Vagina (tissue), 2 donors: ENCODE measurements at regions of chrX and their contacts with region 1.

Region 1: DNA sequence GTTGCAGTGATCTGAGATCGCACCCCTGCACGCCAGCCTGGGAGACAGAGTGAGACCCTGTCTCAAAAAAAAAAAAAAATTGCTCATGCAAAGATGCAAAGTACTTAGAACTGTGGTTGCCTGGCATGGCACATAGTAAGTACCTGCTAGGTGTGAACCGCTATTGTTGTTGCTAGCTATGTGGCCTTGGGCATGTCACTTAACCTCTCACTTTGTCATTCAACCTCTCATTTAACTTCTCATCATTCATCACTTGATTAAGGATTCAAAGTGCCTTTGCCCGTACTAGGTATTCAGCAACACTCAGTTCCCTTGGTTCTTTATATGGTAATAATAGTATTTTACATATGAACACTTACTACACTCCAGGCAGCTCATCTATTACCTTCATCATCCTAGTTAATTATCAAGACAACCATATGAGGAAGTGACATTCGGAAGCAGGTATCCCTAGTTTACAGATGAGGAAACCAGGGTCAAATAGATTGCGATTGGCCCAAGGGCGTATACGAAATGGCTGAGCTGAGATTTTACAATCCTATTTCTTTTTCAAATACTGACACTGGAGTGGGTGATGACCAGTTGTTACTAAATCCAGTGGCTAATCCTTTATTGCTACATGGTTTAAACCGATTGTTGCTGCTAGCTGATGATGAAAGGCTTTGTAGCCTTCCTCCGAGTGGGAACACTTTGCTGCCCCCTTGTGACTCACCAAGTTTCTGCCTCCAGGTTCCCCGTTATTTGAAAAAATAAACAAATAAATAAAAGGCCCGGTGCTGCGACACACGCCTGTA is 28.8 kb upstream of the SOWAHD start:
- DNase-seq: no peak
- H3K4me3 ChIP-seq: no peak overlapping the region
- H3K27ac ChIP-seq: no peak overlapping the region
- H3K4me1 ChIP-seq: no peaks in the 10 kb centered on the region
- H3K27me3 ChIP-seq: no peaks in the 10 kb centered on the region
- CTCF ChIP-seq: peak; percentile 31 to 64 (median 34)
- POLR2A ChIP-seq: no peak

Region 2: DNA sequence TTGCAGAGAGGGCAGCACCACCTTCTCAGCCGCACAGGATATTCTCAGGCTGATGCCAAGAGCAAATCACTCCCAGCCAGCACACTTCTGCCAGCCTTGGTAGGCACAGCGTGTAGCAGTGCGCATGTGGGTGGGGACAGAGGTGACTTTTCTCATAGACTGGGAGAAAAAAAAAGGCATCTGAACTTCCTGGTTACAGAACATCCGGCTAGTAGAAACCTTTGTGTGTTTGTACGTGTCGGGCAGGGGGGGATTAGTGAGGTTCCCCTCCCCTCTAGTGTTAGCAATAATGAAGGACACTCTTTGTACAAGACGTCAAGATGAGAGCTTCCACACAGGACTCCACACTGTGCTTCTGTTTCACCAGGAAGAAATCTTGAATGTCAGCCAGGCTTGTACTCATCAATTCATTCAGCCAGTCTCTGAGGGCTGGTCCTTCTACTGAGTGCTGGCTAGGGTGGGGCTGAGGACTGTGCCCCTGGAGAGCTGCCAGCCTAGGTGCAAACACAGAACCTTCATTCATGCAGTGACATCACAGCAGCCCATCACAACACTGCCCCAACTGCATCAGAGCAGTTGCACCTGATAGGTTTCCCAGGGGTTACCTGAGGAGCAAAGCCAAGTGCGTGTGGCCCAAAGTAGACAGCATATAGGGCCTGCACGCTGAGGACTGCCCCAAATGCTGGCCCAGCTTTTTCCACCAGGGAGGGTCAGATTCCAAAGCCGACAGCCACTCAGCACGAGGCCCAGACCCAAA is 226.7 kb before region 1 on chrX:
- intact Hi-C with region 1: no loop called
- DNase-seq: no peak
- H3K4me3 ChIP-seq: no peak overlapping the region
- H3K27ac ChIP-seq: no peak overlapping the region
- H3K4me1 ChIP-seq: peaks cover 10% of the 10 kb centered on the region
- H3K27me3 ChIP-seq: no peaks in the 10 kb centered on the region
- CTCF ChIP-seq: no peak
- POLR2A ChIP-seq: no peak

Region 3: DNA sequence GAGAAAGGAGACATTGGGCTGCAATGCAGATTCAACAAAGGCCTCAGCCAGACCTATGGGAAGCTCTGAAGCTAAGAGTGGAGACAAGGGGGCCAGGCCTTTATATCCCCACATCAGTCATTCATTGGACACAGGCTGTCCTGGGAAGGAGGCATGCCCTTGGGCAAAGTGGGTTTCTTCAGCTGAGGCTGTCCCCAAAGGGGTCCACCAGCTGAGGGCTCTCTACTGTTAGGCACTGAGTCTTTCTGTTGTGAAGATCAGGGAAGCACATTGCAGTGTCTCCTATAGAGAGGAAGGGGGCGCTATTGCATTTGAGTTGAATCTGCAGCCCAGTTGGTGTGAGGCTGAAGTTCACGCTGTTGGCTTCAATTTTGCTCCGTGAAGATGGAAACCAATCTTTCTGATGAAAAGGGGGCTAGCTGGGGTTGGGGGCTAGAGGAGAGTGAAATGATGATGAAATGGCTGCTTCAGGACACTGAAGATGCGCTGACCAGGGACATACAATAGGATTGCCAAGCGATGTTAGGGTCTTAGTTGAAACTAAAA is 213.4 kb before region 1 on chrX:
- intact Hi-C with region 1: loop called (anchors 10 kb)
- DNase-seq: no peak
- H3K4me3 ChIP-seq: no peak overlapping the region
- H3K27ac ChIP-seq: no peak overlapping the region
- H3K4me1 ChIP-seq: no peaks in the 10 kb centered on the region
- H3K27me3 ChIP-seq: no peaks in the 10 kb centered on the region
- CTCF ChIP-seq: peak; percentile 42 to 73 (median 66)
- POLR2A ChIP-seq: no peak